ENCODE measurements at regions of chr1 and their contacts with region 1.

Region 1: DNA sequence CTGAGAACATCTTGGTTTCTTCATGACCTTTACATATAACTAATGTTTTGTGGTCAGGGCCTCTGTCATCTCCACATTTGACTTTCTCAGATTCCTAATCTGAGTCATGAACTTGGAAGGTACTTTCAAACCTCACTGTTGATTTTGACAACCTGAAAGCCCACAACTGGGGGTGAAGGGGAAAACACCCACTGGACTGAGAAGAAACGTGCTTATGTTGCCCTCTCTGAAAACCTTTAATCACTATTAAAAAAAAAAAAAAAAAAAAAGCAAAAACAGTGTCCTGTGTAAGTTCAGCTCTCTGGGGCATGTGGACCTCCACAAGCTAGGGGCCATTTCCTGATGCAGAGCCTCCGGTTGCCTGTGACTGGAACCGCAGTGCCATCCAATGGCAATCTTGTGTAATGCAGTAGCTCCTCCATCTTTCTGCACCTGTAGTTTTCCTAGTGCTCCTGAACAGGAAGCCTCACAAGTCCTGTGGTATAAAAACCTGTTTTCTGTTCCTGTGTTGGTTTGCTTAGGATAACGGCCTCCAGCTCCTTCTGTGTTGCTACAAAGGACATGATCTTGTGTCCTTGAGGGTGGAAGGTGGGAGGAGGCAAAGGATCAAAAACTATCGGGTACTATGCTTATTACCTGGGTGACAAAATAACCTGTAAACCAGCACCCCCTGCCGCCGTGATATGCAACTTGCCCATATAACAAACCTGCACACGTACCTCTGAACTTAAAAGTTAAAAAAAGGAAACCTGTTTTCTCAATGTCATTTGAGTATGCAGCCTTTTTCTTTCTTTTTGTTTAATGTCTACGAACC is 124.5 kb downstream of the ZNF648 start:
- DNase-seq: peak; percentile 70
- H3K4me3 ChIP-seq: no peak overlapping the region
- H3K27ac ChIP-seq: no peak overlapping the region
- H3K4me1 ChIP-seq: no peaks in the 10 kb centered on the region
- CTCF ChIP-seq: peak; percentile 87

Region 2: DNA sequence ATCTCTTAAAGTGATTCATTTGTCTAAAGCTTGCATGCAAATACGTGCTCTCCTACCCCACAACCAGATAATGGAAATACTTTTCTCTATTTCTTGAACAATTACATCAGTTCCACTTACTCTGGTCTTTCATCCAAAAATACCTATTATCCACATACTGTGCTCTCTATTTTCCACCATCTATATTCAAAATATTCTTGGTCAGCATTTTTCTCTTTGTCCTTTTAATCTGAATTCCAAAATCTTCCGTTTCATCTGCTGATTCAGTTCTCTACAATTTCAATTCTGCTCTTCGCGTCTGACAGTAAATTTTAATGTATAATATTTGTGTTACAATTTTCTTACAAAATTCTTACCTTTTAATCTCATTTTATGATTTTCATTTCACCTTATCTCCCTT is 14.2 kb after region 1 on chr1:
- CTCF ChIA-PET with region 1: no interaction called
- POLR2A ChIA-PET with region 1: interaction called, 3 read pairs
- intact Hi-C with region 1: loop called (anchors 1 kb)
- DNase-seq: no peak
- H3K4me3 ChIP-seq: no peak overlapping the region
- H3K27ac ChIP-seq: no peak overlapping the region
- H3K4me1 ChIP-seq: no peaks in the 10 kb centered on the region
- CTCF ChIP-seq: no peak

Region 3: GRCh38 chr1:182340233-182340926 is 403.4 kb after region 1 on chr1:
- CTCF ChIA-PET with region 1: no interaction called
- POLR2A ChIA-PET with region 1: no interaction called
- intact Hi-C with region 1: no loop called
- DNase-seq: no peak
- H3K4me3 ChIP-seq: no peak overlapping the region
- H3K27ac ChIP-seq: no peak overlapping the region
- H3K4me1 ChIP-seq: no peaks in the 10 kb centered on the region
- CTCF ChIP-seq: no peak

Measured in OCI-LY7 (cell line).